GM10248 (cell line): ENCODE measurements at regions of chr1 and their contacts with region 1.

Region 1: GRCh38 chr1:84753516-84754385 is 63.5 kb upstream of the SSX2IP start:
- DNase-seq: peak; percentile 78
- CTCF ChIP-seq: peak; percentile 95

Region 2: DNA sequence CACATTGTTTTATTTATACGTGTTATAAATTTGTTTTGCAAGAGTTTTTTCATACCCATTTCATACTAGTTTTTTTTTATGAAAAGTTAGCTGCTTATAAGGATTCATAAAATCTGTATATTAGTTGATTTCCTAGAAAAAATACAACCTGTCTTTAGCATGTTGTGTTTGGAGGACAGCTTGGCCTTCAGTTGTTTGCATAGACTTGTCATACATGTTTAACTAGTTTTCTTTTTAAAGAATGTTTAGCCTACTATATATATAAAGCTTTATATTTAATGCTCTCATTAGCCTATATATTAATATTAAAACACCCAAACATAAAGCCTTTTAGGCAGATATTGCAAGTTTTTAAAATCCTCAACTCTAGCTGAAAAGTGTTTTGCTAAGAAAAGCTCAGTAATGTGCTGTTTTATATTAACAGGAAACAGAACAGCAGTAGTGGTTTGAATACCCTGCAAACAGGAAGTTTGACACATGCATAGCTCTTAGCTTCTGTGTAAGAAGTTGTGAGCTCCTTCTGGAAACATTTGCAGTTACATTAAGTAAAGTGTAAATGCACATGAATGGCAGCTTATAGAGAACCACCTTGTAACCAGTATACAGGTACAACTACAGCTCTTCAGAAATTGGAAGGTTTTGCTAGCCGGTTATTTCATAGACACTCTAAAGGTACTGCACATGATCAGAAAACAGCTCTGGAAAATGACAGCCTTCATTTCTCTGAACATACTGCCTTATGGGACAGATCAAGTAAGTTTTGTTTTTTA is 609.8 kb before region 1 on chr1 and contains the start of gene PRKACB:
- CTCF ChIA-PET with region 1: interaction called, 10 read pairs
- POLR2A ChIA-PET with region 1: no interaction called
- DNase-seq: peak; percentile 18
- CTCF ChIP-seq: no peak

Region 3: GRCh38 chr1:84442256-84442655 is 311.5 kb before region 1 on chr1:
- CTCF ChIA-PET with region 1: interaction called, 31 read pairs
- POLR2A ChIA-PET with region 1: no interaction called
- DNase-seq: peak; percentile 65
- CTCF ChIP-seq: peak; percentile 52

Region 4: DNA sequence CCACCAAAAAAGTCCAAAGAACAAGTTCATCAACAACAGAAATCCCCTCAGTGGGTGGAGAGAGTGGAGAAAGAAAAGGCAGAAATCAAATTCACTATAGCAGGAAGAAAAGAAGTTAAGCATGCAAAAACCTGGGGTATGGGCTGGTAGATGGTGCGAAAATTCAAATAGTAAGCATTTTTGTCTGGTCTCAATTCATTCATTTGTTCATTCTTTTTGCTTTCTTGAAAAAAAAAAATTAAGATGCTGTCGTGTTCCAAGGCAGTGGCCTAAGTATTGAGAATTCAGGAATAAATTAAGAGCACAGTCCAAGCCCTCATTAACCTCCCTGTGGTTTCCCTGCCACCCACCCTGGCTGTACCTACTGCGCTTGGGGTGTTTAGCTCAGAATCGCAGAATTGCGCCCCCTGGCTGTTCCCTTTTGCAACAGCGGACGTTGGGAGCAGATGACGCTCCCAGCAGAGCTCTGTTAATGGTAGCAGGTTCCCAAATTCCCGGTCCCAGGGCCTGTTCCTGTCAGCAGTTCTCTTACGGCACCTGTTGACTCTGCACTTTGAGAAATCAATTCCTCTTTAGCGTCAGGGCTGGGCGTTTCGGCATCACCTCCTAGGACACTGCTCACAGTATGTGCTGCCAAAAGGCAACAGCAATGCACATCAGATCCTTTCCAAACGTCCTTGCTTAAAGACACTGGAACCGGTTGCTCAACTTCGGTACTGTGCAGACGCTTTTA is 29.5 kb before region 1 on chr1:
- CTCF ChIA-PET with region 1: interaction called, 11 read pairs
- POLR2A ChIA-PET with region 1: no interaction called
- DNase-seq: peak; percentile 24
- CTCF ChIP-seq: peak; percentile 36

Region 5: GRCh38 chr1:84742653-84743052 is 11.1 kb before region 1 on chr1:
- CTCF ChIA-PET with region 1: interaction called, 14 read pairs
- POLR2A ChIA-PET with region 1: no interaction called
- DNase-seq: no peak
- CTCF ChIP-seq: no peak

Region 6: DNA sequence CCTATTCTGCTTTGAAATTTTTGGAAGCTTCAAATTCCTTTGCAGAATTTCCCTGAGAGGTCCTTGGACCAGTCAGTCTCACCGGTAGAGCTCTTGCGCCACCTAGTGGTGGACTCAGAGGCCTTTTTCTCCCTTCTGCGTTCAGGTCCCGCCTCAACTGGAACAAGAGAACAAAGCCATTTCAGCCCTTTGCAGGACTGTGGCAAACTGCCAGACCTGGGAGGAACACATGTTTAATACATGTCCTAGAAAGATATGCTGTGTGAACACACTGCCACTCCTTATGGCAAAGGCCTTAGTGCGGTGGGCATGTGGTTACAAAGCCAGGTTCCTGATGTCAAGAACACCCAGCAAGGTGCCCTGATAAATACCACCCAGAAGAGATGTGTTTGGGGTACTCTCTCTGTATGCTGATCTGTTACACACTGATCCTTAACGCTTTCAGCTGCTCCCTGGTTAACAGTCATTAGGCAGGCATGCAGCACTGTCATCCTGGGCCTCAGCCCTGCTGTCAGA is 18.7 kb after region 1 on chr1:
- CTCF ChIA-PET with region 1: interaction called, 55 read pairs
- POLR2A ChIA-PET with region 1: no interaction called
- DNase-seq: peak; percentile 72
- CTCF ChIP-seq: peak; percentile 80